Dorsolateral prefrontal cortex (tissue), 120 donors: ENCODE measurements at regions of chr12 and their contacts with region 1.

Region 1: GRCh38 chr12:49644620-49644994 is 21.2 kb downstream of the PRPF40B start:
- DNase-seq: peak; percentile 78 to 92 (median 86)
- H3K4me3 ChIP-seq: no peak overlapping the region
- H3K27ac ChIP-seq: peak overlapping the region in 53 of 59 donors; percentile 2 to 84 (median 59)
- H3K27me3 ChIP-seq: no peaks in the 10 kb centered on the region
- CTCF ChIP-seq: peak; percentile 80 to 99 (median 96)

Region 2: DNA sequence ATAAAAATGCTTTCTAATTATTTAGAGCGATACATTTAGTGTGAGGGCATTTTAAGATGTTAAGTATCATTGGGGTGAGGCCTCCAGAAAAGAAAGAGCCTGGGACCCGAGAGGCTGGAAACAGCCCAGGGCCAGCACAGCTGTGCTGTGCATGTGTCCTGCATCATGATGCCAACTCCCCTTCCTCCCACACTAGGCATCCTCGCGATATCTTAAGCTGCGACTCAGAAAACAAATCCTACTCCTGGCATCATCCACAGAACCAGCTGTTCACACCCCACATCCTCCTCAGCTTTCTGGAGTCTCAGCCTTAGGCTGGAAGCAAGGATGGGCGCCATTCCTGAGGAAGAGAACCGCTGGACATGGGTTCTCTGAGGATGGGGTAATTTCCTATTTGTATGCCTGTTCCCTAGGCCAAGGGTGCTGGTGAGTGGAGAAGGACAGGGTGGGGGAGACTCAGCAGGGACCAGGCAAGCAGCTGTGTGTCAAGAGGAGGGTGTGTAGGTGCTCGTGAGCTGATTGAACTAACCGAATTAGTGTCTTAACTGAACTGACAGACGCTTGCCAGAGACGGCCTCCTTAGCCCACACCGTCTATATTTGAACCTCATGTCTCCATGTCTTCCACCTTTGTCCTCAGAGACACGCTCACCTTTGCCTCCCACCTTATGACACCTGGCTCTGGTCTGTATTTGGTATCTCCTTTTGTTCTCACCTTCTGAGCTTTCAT is 61.1 kb before region 1 on chr12:
- intact Hi-C with region 1: no loop called
- DNase-seq: peak in 3 of 10 donors; percentile 32 to 49 (median 43)
- H3K4me3 ChIP-seq: peak overlapping the region in 46 of 59 donors; percentile 0 to 50 (median 28)
- H3K27ac ChIP-seq: peak overlapping the region in 53 of 59 donors; percentile 6 to 80 (median 64)
- H3K27me3 ChIP-seq: no peaks in the 10 kb centered on the region
- CTCF ChIP-seq: no peak

Region 3: GRCh38 chr12:49664591-49665239 is 20.1 kb after region 1 on chr12:
- intact Hi-C with region 1: loop called in 1 of 2 experiments (anchors 2 kb)
- DNase-seq: no peak
- H3K4me3 ChIP-seq: no peak overlapping the region
- H3K27ac ChIP-seq: peak overlapping the region in 53 of 59 donors; percentile 1 to 99 (median 74)
- H3K27me3 ChIP-seq: no peaks in the 10 kb centered on the region
- CTCF ChIP-seq: no peak

Region 4: GRCh38 chr12:49673446-49674317 is 29.1 kb after region 1 on chr12:
- intact Hi-C with region 1: loop called (anchors 2 kb)
- DNase-seq: peak; percentile 89 to 98 (median 95)
- H3K4me3 ChIP-seq: peak overlapping the region in 48 of 59 donors; percentile 1 to 48 (median 26)
- H3K27ac ChIP-seq: peak overlapping the region; percentile 30 to 99 (median 97)
- H3K27me3 ChIP-seq: no peaks in the 10 kb centered on the region
- CTCF ChIP-seq: peak in 41 of 56 donors; percentile 7 to 64 (median 44)

Region 5: DNA sequence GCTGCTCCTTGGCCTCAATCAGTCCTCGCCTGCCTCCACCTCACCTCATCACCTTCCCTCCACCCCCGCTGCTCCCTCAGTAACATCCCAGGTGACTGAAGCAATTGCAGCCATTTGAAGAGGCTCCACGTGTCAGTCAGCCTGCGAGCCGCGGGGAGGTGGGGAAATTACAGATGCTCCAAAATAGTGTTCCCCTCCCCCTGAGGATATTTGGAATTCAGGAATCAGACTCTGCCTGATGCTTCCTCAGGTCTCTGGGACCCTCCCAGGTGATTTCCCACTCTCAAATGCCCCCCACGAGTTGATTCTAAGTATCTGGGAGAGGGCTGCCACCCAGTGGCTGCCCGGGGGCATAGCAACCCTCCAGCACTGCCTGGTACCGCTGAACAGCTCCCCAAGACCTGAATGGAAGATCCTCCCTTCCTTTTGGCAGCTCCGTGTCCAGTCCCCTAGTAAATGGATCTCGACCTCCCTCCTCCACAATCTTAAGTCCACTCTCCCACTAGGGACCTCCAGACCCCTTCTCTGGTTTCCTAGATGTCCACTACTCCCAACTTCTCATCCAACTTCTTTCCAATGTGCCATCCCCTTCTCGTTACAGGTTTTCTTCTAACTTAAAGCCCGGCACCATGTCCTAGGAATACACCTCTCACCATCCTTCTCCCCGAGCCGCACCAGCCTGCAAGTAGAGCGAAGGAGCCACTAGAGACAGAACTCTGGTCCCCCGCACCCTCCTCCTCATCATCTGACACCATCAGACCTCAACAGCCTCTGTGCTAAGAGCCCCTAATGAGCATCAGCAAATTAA is 411.4 kb after region 1 on chr12:
- intact Hi-C with region 1: no loop called
- DNase-seq: peak; percentile 36 to 71 (median 64)
- H3K4me3 ChIP-seq: peak overlapping the region in 48 of 59 donors; percentile 0 to 81 (median 71)
- H3K27ac ChIP-seq: peak overlapping the region in 56 of 59 donors; percentile 8 to 90 (median 76)
- H3K27me3 ChIP-seq: no peaks in the 10 kb centered on the region
- CTCF ChIP-seq: peak; percentile 75 to 99 (median 95)